Heart left ventricle (tissue), 16 donors: ENCODE measurements at regions of chr2 and their contacts with region 1.

Region 1: DNA sequence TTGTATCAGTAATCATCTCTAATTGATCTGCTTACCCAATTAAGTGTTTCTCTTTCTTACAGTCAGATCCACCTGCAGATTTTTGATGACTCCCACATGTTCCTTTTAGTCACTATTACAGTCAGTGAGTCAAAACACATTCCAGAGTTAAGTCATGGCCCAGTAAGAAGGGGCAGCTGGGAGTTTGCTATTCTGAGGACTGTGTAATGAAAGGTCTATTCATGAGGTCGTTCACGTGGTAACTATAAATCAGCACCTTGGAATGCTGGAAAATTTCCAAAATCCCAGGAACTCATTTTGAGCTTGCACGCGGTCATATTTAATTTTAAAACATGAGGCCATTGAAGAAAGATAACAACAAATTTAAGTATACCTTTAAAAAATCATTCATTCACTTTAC is 252.5 kb downstream of the XIRP2 start:
- DNase-seq: peak in 3 of 5 donors; percentile 26 to 40 (median 38)
- ATAC-seq: peak; percentile 97 to 99 (median 98)
- H3K4me3 ChIP-seq: peak overlapping the region in 2 of 12 donors; percentile 8 to 11
- H3K27ac ChIP-seq: peak overlapping the region in 9 of 12 donors; percentile 34 to 80 (median 70)
- H3K4me1 ChIP-seq: peaks cover 0 to 18% (median 3%) of the 10 kb centered on the region in 12 donors
- H3K27me3 ChIP-seq: no peaks in the 10 kb centered on the region
- CTCF ChIP-seq: no peak
- POLR2A ChIP-seq: no peak

Region 2: GRCh38 chr2:167157523-167157922 is 16.8 kb after region 1 on chr2:
- intact Hi-C with region 1: no loop called
- DNase-seq: no peak
- ATAC-seq: no peak
- H3K4me3 ChIP-seq: no peak overlapping the region
- H3K27ac ChIP-seq: no peak overlapping the region
- H3K4me1 ChIP-seq: no peaks in the 10 kb centered on the region
- H3K27me3 ChIP-seq: no peaks in the 10 kb centered on the region
- CTCF ChIP-seq: no peak
- POLR2A ChIP-seq: no peak

Region 3: DNA sequence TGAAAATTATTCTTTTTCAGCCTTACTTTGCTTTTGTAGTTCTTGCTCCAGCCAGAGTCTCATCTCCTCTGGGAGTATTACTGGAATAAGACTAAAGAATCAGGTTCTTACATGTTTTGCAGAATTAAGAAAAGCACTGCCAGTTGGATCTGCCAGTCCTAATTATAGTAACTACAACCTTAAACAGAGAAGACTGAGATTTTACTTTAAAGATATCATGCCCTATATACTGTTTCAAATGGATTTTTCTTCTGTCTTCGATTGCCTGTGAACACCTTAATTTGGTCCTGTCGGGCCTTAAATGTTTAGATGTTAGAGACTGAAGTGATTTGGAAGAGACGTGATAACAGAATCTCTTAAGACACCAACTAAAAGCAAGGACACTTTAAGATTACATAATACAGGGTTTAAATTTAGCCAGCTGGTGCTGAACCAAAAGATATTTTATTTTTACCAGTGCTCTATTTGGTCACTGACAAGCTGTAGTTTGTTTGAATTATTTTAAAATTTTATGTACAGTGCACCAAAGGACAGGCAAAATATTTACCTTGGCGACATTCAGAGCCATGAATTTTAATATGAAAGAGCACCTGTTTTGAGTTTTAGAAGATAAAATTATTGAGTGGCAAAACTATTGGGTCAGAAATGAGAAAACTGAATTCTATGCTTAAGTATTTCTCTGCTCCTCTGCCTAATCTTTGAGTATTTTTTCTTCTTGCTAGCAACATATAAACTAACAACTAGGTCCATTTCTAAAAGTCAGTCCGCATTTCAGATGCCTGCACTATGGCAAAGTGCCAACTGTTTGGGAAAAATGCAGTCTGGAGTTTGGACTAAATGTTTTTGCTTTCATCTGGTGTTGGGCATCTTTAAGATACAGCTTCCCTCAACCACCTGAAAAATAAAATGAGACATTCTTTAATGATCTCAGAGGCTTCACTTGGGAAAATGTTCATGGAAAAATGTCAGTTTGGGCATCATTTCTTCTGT is 47.5 kb after region 1 on chr2:
- intact Hi-C with region 1: loop called in 6 of 10 experiments (anchors 5 kb)
- DNase-seq: no peak
- ATAC-seq: peak; percentile 27 to 65 (median 54)
- H3K4me3 ChIP-seq: peak overlapping the region; percentile 14 to 60 (median 47)
- H3K27ac ChIP-seq: peak overlapping the region; percentile 37 to 91 (median 80)
- H3K4me1 ChIP-seq: peaks cover 0 to 24% (median 0%) of the 10 kb centered on the region in 12 donors
- H3K27me3 ChIP-seq: no peaks in the 10 kb centered on the region
- CTCF ChIP-seq: no peak
- POLR2A ChIP-seq: no peak